Dendritic cell treated with granulocyte-macrophage colony-stimulating factor and Interleukin-4, amounts not matched to agents 40 ng/mL and 50 ng/mL, for 4 days (primary cell): ENCODE measurements at regions of chr1 and their contacts with region 1.

Region 1: GRCh38 chr1:228850141-228851100 is 115.1 kb downstream of the RHOU start:
- H3K4me3 Mint-ChIP-seq: peak overlapping the region; percentile 40
- H3K27ac Mint-ChIP-seq: peak overlapping the region; percentile 82
- H3K4me1 Mint-ChIP-seq: peaks cover 57% of the 10 kb centered on the region
- H3K27me3 Mint-ChIP-seq: no peaks in the 10 kb centered on the region

Region 2: DNA sequence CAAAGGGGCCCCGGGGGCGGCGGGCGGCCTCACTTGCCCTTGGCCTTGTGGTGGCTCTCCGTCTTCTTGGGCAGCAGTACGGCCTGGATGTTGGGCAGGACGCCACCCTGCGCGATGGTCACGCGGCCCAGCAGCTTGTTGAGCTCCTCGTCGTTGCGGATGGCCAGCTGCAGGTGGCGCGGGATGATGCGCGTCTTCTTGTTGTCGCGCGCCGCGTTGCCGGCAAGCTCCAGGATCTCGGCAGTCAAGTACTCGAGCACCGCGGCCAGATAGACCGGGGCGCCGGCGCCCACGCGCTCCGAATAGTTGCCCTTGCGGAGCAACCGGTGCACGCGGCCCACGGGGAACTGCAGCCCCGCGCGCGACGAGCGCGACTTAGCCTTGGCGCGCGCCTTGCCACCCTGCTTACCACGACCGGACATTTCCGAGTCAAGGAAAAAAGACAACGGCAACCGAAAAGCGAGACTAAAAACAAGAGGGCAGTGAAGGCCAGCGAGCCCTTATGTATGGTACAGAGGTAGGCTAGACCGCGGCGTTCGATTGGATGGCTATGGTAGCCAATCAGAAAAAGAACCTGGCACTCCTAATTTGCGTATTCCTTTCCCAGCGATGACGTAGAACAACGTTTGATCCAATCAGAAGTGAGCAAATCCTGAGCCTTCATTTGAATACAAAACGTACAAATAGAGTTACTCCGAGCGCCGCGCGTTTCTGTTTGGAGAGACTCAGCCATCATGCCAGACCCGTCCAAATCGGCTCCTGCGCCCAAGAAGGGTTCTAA is 392.8 kb before region 1 on chr1:
- intact Hi-C with region 1: no loop called
- H3K4me3 Mint-ChIP-seq: peak overlapping the region; percentile 84
- H3K27ac Mint-ChIP-seq: peak overlapping the region; percentile 93
- H3K4me1 Mint-ChIP-seq: peaks cover 31% of the 10 kb centered on the region
- H3K27me3 Mint-ChIP-seq: peaks cover 42% of the 10 kb centered on the region

Region 3: DNA sequence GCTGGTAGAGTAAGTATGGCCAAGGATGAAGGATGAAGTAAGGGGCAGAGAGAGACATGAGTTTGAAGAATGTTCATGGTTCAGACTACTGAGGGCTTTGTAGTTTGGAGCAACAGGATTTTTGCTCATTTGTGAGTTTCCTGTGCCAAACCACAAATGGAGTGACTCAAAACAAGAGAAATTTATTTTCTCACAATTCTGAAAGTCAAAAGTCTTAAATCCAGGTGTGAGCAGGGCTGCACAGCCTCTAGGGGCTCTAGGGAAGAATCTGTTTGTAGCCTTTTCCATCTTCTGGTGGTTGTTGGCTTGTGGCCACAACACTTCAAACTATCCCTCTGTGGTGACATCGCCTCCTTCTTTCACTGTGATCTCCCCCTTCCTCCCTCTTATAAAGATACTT is 56.2 kb before region 1 on chr1:
- intact Hi-C with region 1: loop called (anchors 10 kb)
- H3K4me3 Mint-ChIP-seq: no peak overlapping the region
- H3K27ac Mint-ChIP-seq: no peak overlapping the region
- H3K4me1 Mint-ChIP-seq: peaks cover 10% of the 10 kb centered on the region
- H3K27me3 Mint-ChIP-seq: no peaks in the 10 kb centered on the region